GM10248 (cell line): ENCODE measurements at regions of chr10 and their contacts with region 1.

Region 1: DNA sequence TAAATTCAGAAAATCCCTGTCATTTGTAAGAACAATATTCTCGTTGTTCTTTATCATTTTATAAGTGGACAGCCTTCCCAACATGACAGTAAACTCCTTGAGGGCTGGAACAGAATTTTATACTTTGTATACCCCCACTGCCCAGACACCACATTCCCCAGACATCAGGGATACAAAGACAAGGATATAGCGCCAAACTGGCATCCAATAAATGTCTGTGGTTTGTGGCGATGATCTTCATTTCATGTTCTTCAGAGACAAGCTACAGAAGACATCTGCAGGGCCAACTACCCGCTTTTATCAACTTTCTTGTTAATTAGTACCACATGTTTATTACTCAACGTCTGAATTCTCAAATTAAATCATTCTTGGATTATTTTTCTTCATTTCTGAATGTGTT is 155.9 kb downstream of the ATE1 start:
- DNase-seq: no peak
- CTCF ChIP-seq: no peak

Region 2: GRCh38 chr10:121753726-121754476 is 18.1 kb before region 1 on chr10:
- CTCF ChIA-PET with region 1: no interaction called
- POLR2A ChIA-PET with region 1: no interaction called
- DNase-seq: peak; percentile 51
- CTCF ChIP-seq: no peak

Region 3: DNA sequence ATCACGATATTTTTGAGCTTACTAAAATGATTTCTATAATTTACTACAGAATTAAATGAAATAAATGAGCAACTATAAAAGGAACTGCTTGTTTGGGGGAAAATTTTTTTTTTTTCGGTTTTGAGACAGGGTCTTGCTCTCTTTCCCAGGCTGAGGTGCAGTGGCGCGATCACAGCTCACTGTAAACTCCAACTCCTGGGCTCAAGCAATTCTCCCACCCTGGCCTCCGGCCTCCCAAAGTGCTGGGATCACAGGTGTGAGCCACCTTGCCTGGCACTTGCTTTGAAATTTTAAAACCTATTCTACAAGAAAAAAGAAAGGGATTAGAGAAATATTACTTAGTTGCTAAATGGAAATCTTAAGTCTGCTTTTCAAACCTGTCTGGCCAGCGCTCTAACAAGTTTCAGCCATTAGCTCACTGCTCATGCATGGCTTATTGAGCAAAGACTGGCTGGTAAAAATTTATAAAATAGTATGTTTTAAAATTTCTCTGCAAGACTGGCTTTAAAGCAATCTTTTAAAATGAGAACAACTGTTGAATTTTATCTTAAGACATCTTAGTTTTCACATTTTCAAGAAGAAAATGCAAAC is 11.9 kb after region 1 on chr10:
- CTCF ChIA-PET with region 1: interaction called, 15 read pairs
- POLR2A ChIA-PET with region 1: no interaction called
- DNase-seq: no peak
- CTCF ChIP-seq: no peak

Region 4: GRCh38 chr10:121796342-121796741 is 24.4 kb after region 1 on chr10:
- CTCF ChIA-PET with region 1: no interaction called
- POLR2A ChIA-PET with region 1: no interaction called
- DNase-seq: no peak
- CTCF ChIP-seq: no peak

Region 5: GRCh38 chr10:121942749-121943416 is 170.9 kb after region 1 on chr10:
- CTCF ChIA-PET with region 1: no interaction called
- POLR2A ChIA-PET with region 1: no interaction called
- DNase-seq: no peak
- CTCF ChIP-seq: no peak